MCF 10A (cell line): ENCODE measurements at regions of chr3 and their contacts with region 1.

Region 1: DNA sequence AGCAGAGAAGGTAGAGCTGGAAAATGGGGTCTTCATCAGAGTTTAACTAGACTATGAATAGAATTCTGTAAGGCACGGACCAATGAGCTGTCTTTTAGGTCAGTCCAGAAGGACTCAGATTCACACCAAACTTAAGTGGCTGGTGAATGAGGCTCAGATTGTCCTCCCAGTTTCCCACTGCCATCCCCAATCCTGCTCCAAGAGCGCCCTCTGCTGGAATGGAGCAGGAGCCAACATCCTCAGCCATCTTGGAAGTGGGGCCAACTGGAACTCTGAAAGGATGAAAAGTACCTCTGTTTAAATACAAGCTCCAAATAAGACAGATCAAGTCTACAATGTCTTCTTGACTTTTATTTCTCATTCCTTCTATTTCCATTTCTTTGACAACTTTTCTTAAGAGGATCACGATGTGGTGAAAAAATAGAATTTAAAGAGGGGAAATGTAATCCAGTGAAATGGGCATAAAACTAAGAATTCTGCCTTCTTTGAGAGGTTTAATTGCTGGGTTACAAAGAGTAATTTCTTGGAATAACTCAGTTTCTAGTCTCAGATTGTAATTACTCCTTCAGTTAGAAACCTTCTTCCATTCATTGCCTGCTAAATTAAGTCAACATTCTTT is 217.1 kb upstream of the TPRG1 start:
- DNase-seq: peak; percentile 94
- H3K4me3 Mint-ChIP-seq: no peak overlapping the region
- H3K27ac Mint-ChIP-seq: no peak overlapping the region
- H3K4me1 Mint-ChIP-seq: peaks cover 11% of the 10 kb centered on the region
- H3K27me3 Mint-ChIP-seq: no peaks in the 10 kb centered on the region
- CTCF ChIP-seq: peak; percentile 92

Region 2: GRCh38 chr3:188037216-188037718 is 917.4 kb before region 1 on chr3:
- CTCF ChIA-PET with region 1: interaction called, 4 read pairs
- POLR2A ChIA-PET with region 1: no interaction called
- intact Hi-C with region 1: loop called (anchors 1 kb)
- DNase-seq: peak; percentile 64
- H3K4me3 Mint-ChIP-seq: no peak overlapping the region
- H3K27ac Mint-ChIP-seq: no peak overlapping the region
- H3K4me1 Mint-ChIP-seq: peaks cover 19% of the 10 kb centered on the region
- H3K27me3 Mint-ChIP-seq: no peaks in the 10 kb centered on the region
- CTCF ChIP-seq: peak; percentile 38

Region 3: GRCh38 chr3:188531210-188531609 is 423.5 kb before region 1 on chr3:
- CTCF ChIA-PET with region 1: interaction called, 5 read pairs
- POLR2A ChIA-PET with region 1: no interaction called
- intact Hi-C with region 1: loop called (anchors 10 kb)
- DNase-seq: peak; percentile 64
- H3K4me3 Mint-ChIP-seq: no peak overlapping the region
- H3K27ac Mint-ChIP-seq: no peak overlapping the region
- H3K4me1 Mint-ChIP-seq: peaks cover 9% of the 10 kb centered on the region
- H3K27me3 Mint-ChIP-seq: no peaks in the 10 kb centered on the region
- CTCF ChIP-seq: no peak

Region 4: GRCh38 chr3:188673646-188674186 is 281.0 kb before region 1 on chr3:
- CTCF ChIA-PET with region 1: interaction called, 10 read pairs
- POLR2A ChIA-PET with region 1: interaction called, 8 read pairs
- intact Hi-C with region 1: loop called (anchors 2 kb)
- DNase-seq: peak; percentile 95
- H3K4me3 Mint-ChIP-seq: peak overlapping the region; percentile 43
- H3K27ac Mint-ChIP-seq: peak overlapping the region; percentile 89
- H3K4me1 Mint-ChIP-seq: peaks cover 38% of the 10 kb centered on the region
- H3K27me3 Mint-ChIP-seq: no peaks in the 10 kb centered on the region
- CTCF ChIP-seq: no peak

Region 5: GRCh38 chr3:189148081-189148507 is 193.4 kb after region 1 on chr3:
- CTCF ChIA-PET with region 1: interaction called, 18 read pairs
- POLR2A ChIA-PET with region 1: interaction called, 5 read pairs
- intact Hi-C with region 1: loop called (anchors 1 kb)
- DNase-seq: peak; percentile 73
- H3K4me3 Mint-ChIP-seq: no peak overlapping the region
- H3K27ac Mint-ChIP-seq: no peak overlapping the region
- H3K4me1 Mint-ChIP-seq: peaks cover 6% of the 10 kb centered on the region
- H3K27me3 Mint-ChIP-seq: no peaks in the 10 kb centered on the region
- CTCF ChIP-seq: peak; percentile 59